ENCODE measurements at regions of chr7 and their contacts with region 1.

Region 1: GRCh38 chr7:94436018-94436604 is 41.4 kb downstream of the COL1A2 start:
- H3K4me3 ChIP-seq: no peak overlapping the region
- H3K27ac ChIP-seq: no peak overlapping the region
- H3K4me1 ChIP-seq: no peaks in the 10 kb centered on the region
- CTCF ChIP-seq: peak; percentile 21; the same call in 1 of the 2 replicates

Region 2: DNA sequence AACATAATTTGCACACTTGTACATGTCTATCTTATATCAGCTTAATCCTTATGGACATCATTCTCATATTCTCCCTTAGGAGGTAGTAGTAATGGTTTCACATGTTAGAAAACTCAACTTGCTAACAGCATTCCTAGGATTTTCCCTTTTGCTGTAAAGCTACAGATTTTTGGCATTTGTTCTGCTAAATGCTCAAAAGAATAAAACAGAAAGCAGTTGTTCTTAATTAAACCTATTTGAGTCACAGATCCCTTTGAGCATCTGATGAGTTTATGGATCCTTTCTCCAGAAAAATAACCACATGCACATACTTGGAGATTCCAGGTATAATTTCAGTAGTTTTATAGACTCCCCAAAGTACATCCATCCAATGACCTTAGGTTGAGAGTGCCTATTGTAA is 309.1 kb before region 1 on chr7:
- CTCF ChIA-PET with region 1: no interaction called
- POLR2A ChIA-PET with region 1: no interaction called
- H3K4me3 ChIP-seq: no peak overlapping the region
- H3K27ac ChIP-seq: no peak overlapping the region
- H3K4me1 ChIP-seq: no peaks in the 10 kb centered on the region
- CTCF ChIP-seq: no peak

Region 3: DNA sequence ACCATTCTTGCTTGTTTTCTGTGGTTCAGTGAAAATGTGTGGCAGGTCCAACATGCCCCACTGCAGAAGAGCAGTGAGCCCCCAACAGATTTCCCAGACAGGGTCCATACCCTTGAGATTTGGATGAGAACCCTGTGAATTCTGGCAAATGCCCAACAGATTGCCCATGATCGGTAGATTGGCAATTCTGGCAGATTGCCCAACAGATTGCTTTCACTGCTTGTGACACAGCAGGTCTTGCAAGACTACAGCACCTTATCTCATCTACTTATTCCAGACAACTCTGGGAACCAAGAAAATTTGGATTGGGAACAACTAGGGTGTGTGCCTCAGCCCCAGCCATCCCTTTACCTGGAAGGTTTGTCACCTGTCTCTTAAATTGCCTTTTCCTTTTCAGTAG is 185.1 kb before region 1 on chr7:
- CTCF ChIA-PET with region 1: no interaction called
- POLR2A ChIA-PET with region 1: no interaction called
- H3K4me3 ChIP-seq: no peak overlapping the region
- H3K27ac ChIP-seq: no peak overlapping the region
- H3K4me1 ChIP-seq: peaks cover 17% of the 10 kb centered on the region
- CTCF ChIP-seq: no peak

Region 4: GRCh38 chr7:94295850-94296249 is 140.3 kb before region 1 on chr7:
- CTCF ChIA-PET with region 1: interaction called, 20 read pairs
- POLR2A ChIA-PET with region 1: no interaction called
- H3K4me3 ChIP-seq: no peak overlapping the region
- H3K27ac ChIP-seq: no peak overlapping the region
- H3K4me1 ChIP-seq: no peaks in the 10 kb centered on the region
- CTCF ChIP-seq: no peak

Region 5: GRCh38 chr7:94355454-94355853 is 80.7 kb before region 1 on chr7:
- CTCF ChIA-PET with region 1: interaction called, 3 read pairs
- POLR2A ChIA-PET with region 1: interaction called, 10 read pairs
- H3K4me3 ChIP-seq: no peak overlapping the region
- H3K27ac ChIP-seq: no peak overlapping the region
- H3K4me1 ChIP-seq: no peaks in the 10 kb centered on the region
- CTCF ChIP-seq: no peak

Region 6: GRCh38 chr7:94395141-94396036 is 40.7 kb before region 1 on chr7:
- CTCF ChIA-PET with region 1: interaction called, 12 read pairs
- POLR2A ChIA-PET with region 1: no interaction called
- H3K4me3 ChIP-seq: no peak overlapping the region
- H3K27ac ChIP-seq: no peak overlapping the region
- H3K4me1 ChIP-seq: no peaks in the 10 kb centered on the region
- CTCF ChIP-seq: 0 out of 2 replicates have a peak, but pooled peaks have one; percentile 7

Measured in HEK293 (cell line).